ENCODE measurements at regions of chr1 and their contacts with region 1.

Region 1: DNA sequence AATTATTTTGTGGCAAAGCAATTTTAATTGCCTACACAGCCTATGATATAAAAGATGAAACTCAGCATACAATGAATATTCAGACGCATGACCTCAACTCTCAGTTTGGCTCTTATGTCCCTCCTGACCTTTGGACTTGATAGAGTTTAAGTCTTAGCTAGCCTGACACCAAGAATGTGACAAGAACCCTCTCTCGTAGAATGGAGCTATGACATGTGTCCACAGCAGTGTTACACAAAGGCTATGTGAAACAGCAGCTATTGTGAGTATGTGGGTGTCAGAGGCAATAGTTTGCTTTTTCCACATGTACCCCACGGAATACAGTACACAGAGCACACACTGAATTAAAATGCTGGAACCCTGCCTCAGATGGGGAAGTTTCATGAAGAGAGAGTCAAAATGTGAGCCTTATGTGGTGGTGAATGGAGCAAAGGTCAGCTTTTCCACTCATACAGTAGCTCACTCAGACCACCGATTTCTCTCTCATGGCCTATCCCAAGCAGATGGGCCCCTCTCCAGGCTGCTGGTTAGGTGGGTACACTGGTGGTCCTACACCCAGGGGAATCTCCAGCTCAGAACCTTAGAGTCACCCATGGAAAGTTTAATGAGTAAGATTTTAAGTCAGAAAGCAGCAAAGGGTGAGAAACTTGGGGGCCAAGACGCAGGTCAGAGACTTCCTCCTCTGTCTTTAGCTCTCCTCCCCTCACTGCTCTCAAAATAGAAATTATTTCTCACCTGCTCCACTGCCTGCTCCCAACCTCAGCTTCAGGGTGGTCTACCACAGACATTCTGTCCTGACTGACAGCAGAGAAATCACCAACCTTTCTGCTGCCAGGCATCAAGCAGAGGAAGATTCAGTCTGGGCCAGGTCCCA is 10.1 kb upstream of the XCL2 start:
- ATAC-seq: no peak
- H3K4me3 ChIP-seq: no peak overlapping the region
- H3K27ac ChIP-seq: no peak overlapping the region
- H3K4me1 ChIP-seq: no peaks in the 10 kb centered on the region

Region 2: GRCh38 chr1:168319691-168320090 is 234.2 kb before region 1 on chr1:
- in situ Hi-C with region 1: no loop called
- ATAC-seq: no peak
- H3K4me3 ChIP-seq: no peak overlapping the region
- H3K27ac ChIP-seq: no peak overlapping the region
- H3K4me1 ChIP-seq: no peaks in the 10 kb centered on the region

Region 3: GRCh38 chr1:168342572-168343280 is 211.2 kb before region 1 on chr1:
- in situ Hi-C with region 1: loop called in 2 of 9 experiments (anchors 25 kb)
- ATAC-seq: peak; percentile 95 to 100 (median 100)
- H3K4me3 ChIP-seq: no peak overlapping the region
- H3K27ac ChIP-seq: no peak overlapping the region
- H3K4me1 ChIP-seq: peaks cover 0 to 2% of the 10 kb centered on the region in 2 donors

Region 4: GRCh38 chr1:168603501-168604110 is 49.7 kb after region 1 on chr1:
- in situ Hi-C with region 1: no loop called
- ATAC-seq: peak; percentile 90 to 99 (median 94)
- H3K4me3 ChIP-seq: no peak overlapping the region
- H3K27ac ChIP-seq: no peak overlapping the region
- H3K4me1 ChIP-seq: peaks cover 3 to 20% of the 10 kb centered on the region in 2 donors